ENCODE measurements at regions of chr3 and their contacts with region 1.

Region 1: DNA sequence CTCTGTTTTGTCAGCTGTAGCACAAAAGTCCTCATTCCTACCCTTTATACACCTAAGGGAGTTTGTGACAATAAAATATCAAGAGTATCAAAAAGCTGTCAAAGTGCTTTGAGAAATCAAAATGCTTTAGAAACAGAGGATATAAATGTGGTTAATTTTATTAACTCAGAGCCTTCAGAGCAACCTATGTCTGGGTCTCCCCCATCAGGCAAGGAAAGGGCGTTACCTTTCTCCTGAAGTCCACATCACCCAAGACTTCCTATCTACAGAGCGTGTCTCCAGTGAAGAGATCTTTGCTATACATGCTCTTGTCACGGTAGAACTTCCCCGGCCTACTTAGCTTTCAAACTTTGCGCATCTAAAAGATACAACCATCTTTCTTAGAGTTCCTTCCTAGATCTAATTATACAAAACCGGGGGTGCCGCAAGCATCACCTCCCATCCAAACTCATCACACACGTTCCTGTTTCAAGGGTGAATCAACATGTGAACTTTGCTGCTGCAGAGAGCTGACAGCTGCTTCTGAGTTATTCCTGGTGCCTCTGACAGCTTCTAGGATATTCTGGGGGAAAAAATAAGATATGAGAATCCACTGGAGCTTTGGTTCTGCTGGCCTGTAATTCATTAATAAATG is 93.0 kb downstream of the RARB start:
- DNase-seq: no peak
- ATAC-seq: no peak
- H3K4me3 ChIP-seq: no peak overlapping the region
- H3K27ac ChIP-seq: no peak overlapping the region
- H3K4me1 ChIP-seq: peaks cover 6% of the 10 kb centered on the region
- H3K27me3 ChIP-seq: no peaks in the 10 kb centered on the region
- CTCF ChIP-seq: no peak

Region 2: GRCh38 chr3:25403968-25404367 is 117.1 kb before region 1 on chr3:
- intact Hi-C with region 1: no loop called
- DNase-seq: no peak
- ATAC-seq: no peak
- H3K4me3 ChIP-seq: no peak overlapping the region
- H3K27ac ChIP-seq: no peak overlapping the region
- H3K4me1 ChIP-seq: no peaks in the 10 kb centered on the region
- H3K27me3 ChIP-seq: no peaks in the 10 kb centered on the region
- CTCF ChIP-seq: no peak

Region 3: DNA sequence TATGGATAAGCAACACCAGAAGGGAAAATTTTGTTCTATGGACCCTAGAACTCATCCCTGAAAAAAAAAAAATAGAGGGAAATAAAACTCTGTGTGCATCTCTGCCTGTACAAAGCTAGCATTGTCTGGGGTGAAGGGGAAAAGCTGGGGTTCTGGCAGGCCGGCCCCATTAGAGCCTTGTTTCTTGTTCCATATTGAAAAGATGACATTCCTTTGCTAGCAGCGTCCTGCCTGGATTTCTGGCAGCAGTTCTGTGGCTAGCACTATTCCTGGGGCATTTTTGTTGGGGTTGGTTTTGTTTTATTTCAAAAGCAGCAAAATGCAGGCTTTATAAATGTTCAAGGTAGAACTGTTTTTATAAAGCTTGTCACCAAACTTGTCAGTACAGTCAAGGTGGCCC is 47.8 kb before region 1 on chr3:
- intact Hi-C with region 1: no loop called
- DNase-seq: no peak
- ATAC-seq: no peak
- H3K4me3 ChIP-seq: no peak overlapping the region
- H3K27ac ChIP-seq: peak overlapping the region; percentile 28
- H3K4me1 ChIP-seq: peaks cover 58% of the 10 kb centered on the region
- H3K27me3 ChIP-seq: no peaks in the 10 kb centered on the region
- CTCF ChIP-seq: no peak

Region 4: GRCh38 chr3:25566358-25566920 is 45.4 kb after region 1 on chr3:
- intact Hi-C with region 1: loop called (anchors 5 kb)
- DNase-seq: no peak
- ATAC-seq: no peak
- H3K4me3 ChIP-seq: no peak overlapping the region
- H3K27ac ChIP-seq: no peak overlapping the region
- H3K4me1 ChIP-seq: peaks cover 12% of the 10 kb centered on the region
- H3K27me3 ChIP-seq: no peaks in the 10 kb centered on the region
- CTCF ChIP-seq: no peak

Measured in psoas muscle (tissue), 8 donors.